Endothelial cell of umbilical vein (primary cell): ENCODE measurements at regions of chr6 and their contacts with region 1.

Region 1: DNA sequence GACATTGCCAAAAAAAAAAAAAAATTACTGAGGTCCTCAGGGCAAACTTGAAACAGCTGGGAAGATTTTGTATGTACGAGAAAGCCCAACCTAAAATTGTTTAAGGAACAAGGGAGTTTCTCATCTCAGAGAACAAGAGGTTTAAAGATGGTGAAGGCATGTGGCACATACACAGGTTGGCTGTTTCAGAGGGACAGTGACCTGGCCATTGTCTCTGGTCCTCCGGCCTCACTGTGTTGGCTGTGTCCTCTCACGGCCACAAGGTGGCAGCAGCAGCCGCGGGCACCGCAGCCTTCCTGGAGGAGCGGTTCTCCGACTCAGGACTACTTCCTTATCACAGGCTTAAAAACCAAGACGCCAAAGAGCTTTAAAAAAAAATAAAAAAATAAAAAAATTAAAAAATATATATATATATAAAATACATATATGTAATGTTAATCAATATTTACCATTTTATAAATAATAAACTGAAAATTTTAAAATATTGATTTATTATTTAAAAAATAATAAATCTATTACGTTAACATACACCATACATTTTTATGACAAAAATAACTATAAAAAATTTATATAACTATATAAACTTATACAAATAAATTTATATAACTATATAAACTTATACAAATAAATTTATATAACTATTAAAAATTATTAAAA is 52.8 kb downstream of the GTF2H5 start:
- DNase-seq: peak; percentile 78
- H3K4me3 ChIP-seq: no peak overlapping the region
- H3K27ac ChIP-seq: no peak overlapping the region
- H3K4me1 ChIP-seq: no peaks in the 10 kb centered on the region
- H3K27me3 ChIP-seq: no peaks in the 10 kb centered on the region
- CTCF ChIP-seq: peak; percentile 79 to 94
- POLR2A ChIP-seq: no peak

Region 2: GRCh38 chr6:157579467-157580031 is 641.4 kb before region 1 on chr6:
- CTCF ChIA-PET with region 1: no interaction called
- POLR2A ChIA-PET with region 1: no interaction called
- dilution Hi-C with region 1: no loop called
- intact Hi-C with region 1: no loop called
- DNase-seq: peak; percentile 90
- H3K4me3 ChIP-seq: no peak overlapping the region
- H3K27ac ChIP-seq: peak overlapping the region; percentile 74
- H3K4me1 ChIP-seq: peaks cover 21% of the 10 kb centered on the region
- H3K27me3 ChIP-seq: no peaks in the 10 kb centered on the region
- CTCF ChIP-seq: no peak
- POLR2A ChIP-seq: no peak

Region 3: GRCh38 chr6:158086054-158086503 is 134.8 kb before region 1 on chr6:
- CTCF ChIA-PET with region 1: no interaction called
- POLR2A ChIA-PET with region 1: no interaction called
- dilution Hi-C with region 1: no loop called
- intact Hi-C with region 1: no loop called
- DNase-seq: no peak
- H3K4me3 ChIP-seq: no peak overlapping the region
- H3K27ac ChIP-seq: no peak overlapping the region
- H3K4me1 ChIP-seq: peaks cover 6% of the 10 kb centered on the region
- H3K27me3 ChIP-seq: no peaks in the 10 kb centered on the region
- CTCF ChIP-seq: no peak
- POLR2A ChIP-seq: no peak

Region 4: DNA sequence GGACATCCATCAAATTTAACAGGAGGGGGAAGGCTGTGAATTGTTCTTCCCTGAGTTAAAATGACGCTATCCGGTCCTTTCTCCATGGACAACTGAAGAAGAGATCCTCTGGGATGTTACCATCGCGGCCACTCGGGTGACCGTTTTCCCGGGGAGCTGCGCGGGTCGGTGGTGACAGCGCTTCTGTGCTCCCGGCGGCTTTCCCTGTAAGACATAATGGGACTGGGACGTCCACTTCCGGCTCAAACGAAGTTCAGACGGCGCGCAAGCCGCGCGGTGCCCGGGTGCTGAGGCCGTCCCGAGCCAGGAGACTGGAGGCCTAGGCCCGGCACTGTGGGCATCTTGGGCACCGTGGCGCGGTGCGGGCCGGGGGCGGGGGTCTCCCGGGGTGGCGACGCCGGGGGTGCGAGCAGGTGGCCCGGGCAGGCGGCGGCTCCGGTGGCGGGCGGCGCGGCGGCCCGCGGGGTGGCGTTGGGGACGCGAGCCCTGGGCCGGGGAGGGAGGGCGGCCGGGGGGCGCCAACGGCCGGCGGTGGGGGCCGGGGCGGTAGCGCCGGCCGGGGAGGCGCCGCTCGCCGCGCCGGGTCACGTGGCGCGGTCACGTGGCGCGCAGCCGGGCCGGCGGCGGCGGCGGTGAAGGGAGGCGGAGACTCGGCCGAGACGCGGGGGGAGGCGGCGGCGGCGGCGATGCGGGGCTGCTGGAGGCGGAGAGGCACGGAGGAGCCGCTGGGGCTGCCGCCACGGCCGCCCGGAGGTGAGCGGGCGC is 10.8 kb after region 1 on chr6:
- CTCF ChIA-PET with region 1: interaction called, 19 read pairs
- POLR2A ChIA-PET with region 1: no interaction called
- dilution Hi-C with region 1: no loop called
- intact Hi-C with region 1: no loop called
- DNase-seq: peak; percentile 53
- H3K4me3 ChIP-seq: peak overlapping the region; percentile 9 to 71 (median 43)
- H3K27ac ChIP-seq: peak overlapping the region; percentile 63
- H3K4me1 ChIP-seq: peaks cover 17% of the 10 kb centered on the region
- H3K27me3 ChIP-seq: no peaks in the 10 kb centered on the region
- CTCF ChIP-seq: no peak
- POLR2A ChIP-seq: no peak

Region 5: DNA sequence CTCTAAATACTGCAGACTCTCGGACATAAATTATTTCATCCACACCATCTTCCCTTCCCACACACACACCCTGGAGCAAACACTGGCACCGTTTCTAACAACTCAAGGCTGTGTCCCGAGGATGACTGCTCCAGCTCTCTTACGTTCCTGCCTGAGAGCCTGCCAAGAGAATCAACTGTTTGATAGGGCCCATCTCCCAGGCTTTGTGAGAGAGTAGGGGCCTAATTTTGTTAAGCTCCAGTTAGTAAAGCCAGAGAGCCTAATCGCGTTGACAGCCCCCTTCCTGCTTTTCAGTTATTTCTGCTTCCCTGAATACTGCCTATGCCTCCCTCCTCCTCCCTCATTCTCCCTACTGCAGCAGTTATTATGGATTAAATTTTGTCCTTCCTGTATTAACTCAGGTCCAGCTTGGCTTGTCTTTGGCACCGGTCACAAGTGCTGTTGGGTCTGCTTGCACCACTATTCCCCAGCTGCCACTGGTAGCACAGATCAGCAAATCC is 220.9 kb after region 1 on chr6:
- CTCF ChIA-PET with region 1: interaction called, 11 read pairs
- POLR2A ChIA-PET with region 1: no interaction called
- dilution Hi-C with region 1: no loop called
- intact Hi-C with region 1: no loop called
- DNase-seq: no peak
- H3K4me3 ChIP-seq: no peak overlapping the region
- H3K27ac ChIP-seq: no peak overlapping the region
- H3K4me1 ChIP-seq: no peaks in the 10 kb centered on the region
- H3K27me3 ChIP-seq: no peaks in the 10 kb centered on the region
- CTCF ChIP-seq: no peak
- POLR2A ChIP-seq: no peak

Region 6: GRCh38 chr6:158500016-158500735 is 279.3 kb after region 1 on chr6:
- CTCF ChIA-PET with region 1: interaction called, 11 read pairs
- POLR2A ChIA-PET with region 1: no interaction called
- dilution Hi-C with region 1: no loop called
- intact Hi-C with region 1: no loop called
- DNase-seq: no peak
- H3K4me3 ChIP-seq: no peak overlapping the region
- H3K27ac ChIP-seq: no peak overlapping the region
- H3K4me1 ChIP-seq: no peaks in the 10 kb centered on the region
- H3K27me3 ChIP-seq: no peaks in the 10 kb centered on the region
- CTCF ChIP-seq: no peak
- POLR2A ChIP-seq: no peak

Region 7: GRCh38 chr6:158536084-158536890 is 315.4 kb after region 1 on chr6:
- CTCF ChIA-PET with region 1: interaction called, 12 read pairs
- POLR2A ChIA-PET with region 1: no interaction called
- dilution Hi-C with region 1: no loop called
- intact Hi-C with region 1: no loop called
- DNase-seq: peak; percentile 64
- H3K4me3 ChIP-seq: peak overlapping the region; percentile 32 to 42 (median 39)
- H3K27ac ChIP-seq: no peak overlapping the region
- H3K4me1 ChIP-seq: peaks cover 7% of the 10 kb centered on the region
- H3K27me3 ChIP-seq: peaks cover 22 to 45% of the 10 kb centered on the region in 2 experiments
- CTCF ChIP-seq: no peak
- POLR2A ChIP-seq: no peak

Region 8: DNA sequence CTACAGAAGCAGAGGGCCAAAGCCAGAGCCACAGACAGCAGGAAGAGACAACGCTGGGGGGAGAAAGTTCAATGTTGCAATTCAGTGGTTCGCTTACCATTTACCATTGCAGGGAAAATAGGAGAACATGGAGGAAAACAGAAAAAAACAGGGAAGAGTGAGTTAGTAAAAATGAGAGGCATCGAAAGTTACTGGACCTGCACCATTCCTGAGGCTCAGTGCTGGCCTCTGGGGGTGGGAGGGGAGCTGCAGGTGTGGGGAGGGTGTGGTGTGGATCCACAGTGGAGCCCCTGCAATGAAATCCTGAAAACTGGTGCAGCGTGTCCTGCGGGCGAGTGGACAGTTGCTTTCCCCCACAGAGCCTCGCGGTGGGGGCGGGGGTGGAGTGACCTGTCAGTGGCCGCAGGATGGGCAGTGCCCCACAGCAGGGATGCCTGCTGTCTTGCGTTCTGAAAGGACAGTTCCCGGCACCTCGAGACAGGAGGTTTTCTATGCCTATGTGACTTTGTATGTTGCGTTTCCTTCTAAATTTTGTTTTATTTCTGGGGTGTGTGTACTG is 344.6 kb after region 1 on chr6:
- CTCF ChIA-PET with region 1: interaction called, 14 read pairs
- POLR2A ChIA-PET with region 1: no interaction called
- dilution Hi-C with region 1: no loop called
- intact Hi-C with region 1: loop called (anchors 1 kb)
- DNase-seq: no peak
- H3K4me3 ChIP-seq: no peak overlapping the region
- H3K27ac ChIP-seq: no peak overlapping the region
- H3K4me1 ChIP-seq: peaks cover 19% of the 10 kb centered on the region
- H3K27me3 ChIP-seq: no peaks in the 10 kb centered on the region
- CTCF ChIP-seq: no peak
- POLR2A ChIP-seq: no peak

Region 9: GRCh38 chr6:158644231-158645063 is 423.5 kb after region 1 on chr6 and contains the start of gene DYNLT1:
- CTCF ChIA-PET with region 1: interaction called, 12 read pairs
- POLR2A ChIA-PET with region 1: no interaction called
- dilution Hi-C with region 1: no loop called
- intact Hi-C with region 1: no loop called
- DNase-seq: peak; percentile 92
- H3K4me3 ChIP-seq: peak within 1 kb of the TSS; percentile 74 to 92 (median 85)
- H3K27ac ChIP-seq: peak within 1 kb of the TSS; percentile 92
- H3K4me1 ChIP-seq: peaks cover 28% of the 10 kb centered on the region
- H3K27me3 ChIP-seq: no peaks in the 10 kb centered on the region
- CTCF ChIP-seq: no peak
- POLR2A ChIP-seq: peak; percentile 91
- total RNA-seq, gene DYNLT1: 162 TPM in 2 replicates